ENCODE measurements at regions of chr19 and their contacts with region 1.

Region 1: DNA sequence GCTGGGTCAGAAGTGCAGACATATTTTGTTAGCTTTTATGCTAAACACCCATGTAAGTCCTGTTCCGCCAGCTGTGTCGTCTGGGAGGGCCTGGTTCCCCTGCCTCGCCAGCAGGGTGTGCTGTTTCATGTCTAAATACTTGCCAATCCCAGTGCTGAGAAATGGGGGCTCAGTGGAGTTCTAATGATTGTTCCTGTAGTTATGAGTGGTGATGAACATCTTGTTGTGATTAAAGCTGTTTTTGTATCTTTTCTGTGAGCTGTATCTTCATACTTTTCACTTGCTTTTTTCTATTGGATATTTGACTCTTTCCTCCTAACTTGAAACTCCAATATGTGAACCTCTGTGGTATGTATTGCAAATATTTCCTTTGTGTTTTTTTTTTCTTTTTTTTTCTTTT is 32.7 kb downstream of the KDM4B start:
- DNase-seq: peak; percentile 12 to 51
- H3K4me3 ChIP-seq: peak overlapping the region; percentile 21; the same call in 1 of the 2 replicates
- H3K27ac ChIP-seq: peak overlapping the region; percentile 89
- H3K4me1 ChIP-seq: peaks cover 18% of the 10 kb centered on the region
- H3K27me3 ChIP-seq: no peaks in the 10 kb centered on the region
- CTCF ChIP-seq: peak; percentile 76

Region 2: DNA sequence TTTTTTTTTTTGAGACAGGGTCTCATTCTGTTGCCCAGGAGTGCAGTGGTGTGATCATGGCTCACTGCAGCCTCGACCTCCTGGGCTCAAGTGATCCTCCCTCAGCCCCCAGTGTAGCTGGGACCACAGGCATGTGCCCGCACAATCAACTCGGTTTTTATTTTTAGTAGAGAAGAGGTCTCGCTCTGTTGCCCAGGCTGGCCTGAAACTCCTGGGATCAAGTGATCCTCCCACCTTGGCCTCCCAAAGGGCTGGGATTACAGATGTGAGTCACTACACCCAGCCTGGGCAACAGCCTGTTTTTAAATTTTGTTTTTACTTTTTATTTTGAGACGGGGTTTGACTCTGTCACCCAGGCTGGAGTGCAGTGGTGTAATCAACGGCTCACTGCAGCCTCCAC is 35.0 kb before region 1 on chr19:
- CTCF ChIA-PET with region 1: no interaction called
- POLR2A ChIA-PET with region 1: no interaction called
- intact Hi-C with region 1: no loop called
- DNase-seq: no peak
- H3K4me3 ChIP-seq: no peak overlapping the region
- H3K27ac ChIP-seq: no peak overlapping the region
- H3K4me1 ChIP-seq: peaks cover 19% of the 10 kb centered on the region
- H3K27me3 ChIP-seq: no peaks in the 10 kb centered on the region
- CTCF ChIP-seq: no peak

Region 3: DNA sequence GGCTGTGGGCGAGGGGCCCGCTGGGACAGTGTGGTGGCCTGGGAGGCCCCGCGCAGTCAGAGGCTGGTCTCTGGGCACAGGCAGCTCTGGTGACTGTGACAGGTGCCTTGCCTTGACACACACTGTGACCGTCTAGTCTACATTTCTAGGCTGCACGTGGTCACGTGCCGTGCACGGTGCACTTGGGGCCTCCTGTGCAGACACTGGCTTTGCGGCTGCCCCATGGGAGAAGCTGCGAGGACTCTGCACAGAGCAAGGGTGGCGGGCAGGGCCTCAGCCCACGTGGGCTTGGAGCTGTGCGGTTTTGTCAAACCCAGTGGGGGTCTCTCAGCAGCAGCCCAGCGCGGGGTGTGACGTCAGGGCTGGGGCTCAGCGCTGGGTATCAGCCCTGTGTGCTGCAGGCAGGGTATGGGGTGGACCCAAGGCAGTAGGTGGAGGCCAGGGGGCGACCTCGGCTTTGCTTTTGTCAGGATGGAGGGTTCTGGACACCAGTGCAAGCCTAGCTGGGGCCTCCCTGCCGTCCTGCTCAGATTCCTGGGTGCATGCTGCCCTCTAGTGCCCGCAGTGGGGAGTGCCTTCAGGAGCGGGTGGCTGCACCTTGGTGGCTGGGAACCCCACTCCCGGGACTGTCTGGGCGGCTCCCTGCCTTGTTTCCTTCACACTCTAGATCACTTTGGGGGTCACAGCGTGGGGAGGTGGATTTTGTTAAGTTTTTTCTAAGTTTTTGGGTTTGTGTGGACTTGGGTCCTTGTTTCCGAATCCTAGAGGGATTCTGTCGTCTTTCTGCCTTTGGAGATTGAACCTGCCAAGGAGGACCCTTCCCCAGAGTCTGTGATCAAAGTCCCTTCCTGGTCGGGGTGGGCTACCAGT is 29.9 kb after region 1 on chr19:
- CTCF ChIA-PET with region 1: interaction called, 16 read pairs
- POLR2A ChIA-PET with region 1: no interaction called
- intact Hi-C with region 1: no loop called
- DNase-seq: peak; percentile 40 to 76
- H3K4me3 ChIP-seq: no peak overlapping the region
- H3K27ac ChIP-seq: no peak overlapping the region
- H3K4me1 ChIP-seq: no peaks in the 10 kb centered on the region
- H3K27me3 ChIP-seq: no peaks in the 10 kb centered on the region
- CTCF ChIP-seq: peak; percentile 89

Region 4: DNA sequence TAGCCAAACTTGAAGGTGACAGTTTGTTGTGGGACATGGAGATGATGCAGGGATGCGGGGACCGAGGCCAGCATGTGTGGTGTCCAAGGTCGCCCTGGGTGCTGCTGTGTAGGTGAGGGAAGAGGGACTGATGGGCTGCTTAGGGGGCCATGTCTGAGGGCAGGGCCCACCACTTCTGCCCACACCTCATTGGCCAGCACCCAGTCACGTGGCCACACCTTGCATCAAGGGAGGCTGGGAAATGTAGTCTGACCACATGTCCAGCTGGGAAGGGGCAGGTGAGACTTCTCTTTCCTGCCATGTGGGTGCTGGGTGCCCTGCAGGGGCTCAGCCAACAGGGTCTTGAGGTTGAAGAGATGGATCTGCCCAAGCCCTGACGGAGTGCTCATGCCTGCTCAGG is 56.2 kb after region 1 on chr19:
- CTCF ChIA-PET with region 1: no interaction called
- POLR2A ChIA-PET with region 1: no interaction called
- intact Hi-C with region 1: no loop called
- DNase-seq: no peak
- H3K4me3 ChIP-seq: no peak overlapping the region
- H3K27ac ChIP-seq: no peak overlapping the region
- H3K4me1 ChIP-seq: no peaks in the 10 kb centered on the region
- H3K27me3 ChIP-seq: no peaks in the 10 kb centered on the region
- CTCF ChIP-seq: no peak

Measured in PC-9 (cell line).